Heart left ventricle (tissue), 16 donors: ENCODE measurements at regions of chr14 and their contacts with region 1.

Region 1: GRCh38 chr14:68816262-68816942 is 23.5 kb upstream of the ZFP36L1 start:
- DNase-seq: peak; percentile 91 to 96 (median 92)
- ATAC-seq: peak; percentile 89 to 96 (median 94)
- H3K4me3 ChIP-seq: peak overlapping the region; percentile 17 to 70 (median 56)
- H3K27ac ChIP-seq: peak overlapping the region; percentile 96 to 100 (median 98)
- H3K4me1 ChIP-seq: peaks cover 0 to 61% (median 36%) of the 10 kb centered on the region in 12 donors
- H3K27me3 ChIP-seq: no peaks in the 10 kb centered on the region
- CTCF ChIP-seq: peak in 11 of 12 donors; percentile 94 to 99 (median 97)
- POLR2A ChIP-seq: peak in 1 of 2 donors; percentile 51

Region 2: DNA sequence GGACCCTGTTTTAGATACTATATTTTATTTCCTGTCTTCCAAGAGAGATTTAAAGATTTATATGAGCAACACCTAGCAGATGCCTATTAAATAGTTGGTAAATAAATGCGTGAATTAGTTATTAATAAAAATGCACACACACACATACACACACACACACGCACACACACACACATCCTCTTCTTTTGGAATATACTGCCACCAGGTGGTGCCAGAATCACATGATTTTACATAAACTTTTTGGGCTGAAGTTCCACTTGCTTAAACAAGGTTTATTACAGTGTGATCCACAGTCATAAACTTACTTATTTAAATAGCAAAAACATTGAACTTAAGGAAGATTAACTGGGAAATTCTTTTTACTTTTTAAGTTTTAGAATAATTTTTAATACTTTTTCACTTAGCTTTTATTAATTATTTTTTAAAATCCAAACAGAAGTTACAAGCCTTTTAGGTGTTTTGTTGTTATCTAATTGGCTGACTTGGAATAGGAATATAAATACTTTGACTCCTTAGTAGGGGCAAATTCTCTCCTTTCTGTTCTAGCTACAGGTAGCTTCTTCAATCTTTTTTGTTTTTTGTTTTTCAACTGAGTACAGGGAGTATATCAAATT is 979.3 kb before region 1 on chr14:
- intact Hi-C with region 1: loop called in 6 of 10 experiments (anchors 2 to 10 kb)
- DNase-seq: peak in 3 of 5 donors; percentile 52 to 64 (median 60)
- ATAC-seq: peak in 1 of 4 donors; percentile 41
- H3K4me3 ChIP-seq: no peak overlapping the region
- H3K27ac ChIP-seq: no peak overlapping the region
- H3K4me1 ChIP-seq: no peaks in the 10 kb centered on the region
- H3K27me3 ChIP-seq: no peaks in the 10 kb centered on the region
- CTCF ChIP-seq: peak; percentile 33 to 63 (median 44)
- POLR2A ChIP-seq: no peak

Region 3: GRCh38 chr14:67883717-67884116 is 932.7 kb before region 1 on chr14:
- intact Hi-C with region 1: loop called in 4 of 10 experiments (anchors 2 to 5 kb)
- DNase-seq: no peak
- ATAC-seq: no peak
- H3K4me3 ChIP-seq: no peak overlapping the region
- H3K27ac ChIP-seq: peak overlapping the region in 1 of 12 donors; percentile 22
- H3K4me1 ChIP-seq: peaks cover 0 to 26% (median 0%) of the 10 kb centered on the region in 12 donors
- H3K27me3 ChIP-seq: no peaks in the 10 kb centered on the region
- CTCF ChIP-seq: peak in 9 of 12 donors; percentile 17 to 55 (median 33)
- POLR2A ChIP-seq: no peak

Region 4: DNA sequence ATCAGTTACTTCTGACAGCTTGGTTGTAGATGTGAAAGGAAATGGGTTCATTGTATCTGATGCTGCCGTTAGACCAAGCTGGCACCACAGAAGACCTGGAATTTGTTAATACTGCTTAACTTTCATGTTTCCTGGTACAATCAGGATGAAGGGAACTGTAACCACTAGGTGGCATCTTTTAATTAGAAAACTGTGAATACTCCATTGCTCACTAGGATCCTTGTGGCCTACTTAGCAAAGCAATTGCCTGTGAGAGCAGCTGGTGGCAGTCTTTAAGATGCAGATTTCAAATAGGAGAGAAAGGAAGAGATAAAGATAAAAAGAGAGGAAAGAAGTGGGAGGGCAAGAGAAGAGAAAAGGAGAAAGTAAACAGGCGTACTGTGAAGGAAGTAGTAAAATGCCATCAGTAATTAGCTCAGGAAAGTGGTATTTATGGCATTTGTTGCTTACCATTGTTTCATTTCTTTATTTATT is 882.4 kb before region 1 on chr14:
- intact Hi-C with region 1: loop called in 3 of 10 experiments (anchors 2 to 5 kb)
- DNase-seq: peak in 3 of 5 donors; percentile 27 to 30 (median 30)
- ATAC-seq: peak; percentile 71 to 96 (median 84)
- H3K4me3 ChIP-seq: no peak overlapping the region
- H3K27ac ChIP-seq: peak overlapping the region in 10 of 12 donors; percentile 8 to 58 (median 31)
- H3K4me1 ChIP-seq: peaks cover 0 to 23% (median 6%) of the 10 kb centered on the region in 12 donors
- H3K27me3 ChIP-seq: no peaks in the 10 kb centered on the region
- CTCF ChIP-seq: peak; percentile 46 to 83 (median 62)
- POLR2A ChIP-seq: no peak

Region 5: GRCh38 chr14:67943947-67944346 is 872.5 kb before region 1 on chr14:
- intact Hi-C with region 1: loop called in 9 of 10 experiments (anchors 2 to 5 kb)
- DNase-seq: peak in 4 of 5 donors; percentile 70 to 76 (median 72)
- ATAC-seq: peak; percentile 44 to 76 (median 68)
- H3K4me3 ChIP-seq: no peak overlapping the region
- H3K27ac ChIP-seq: peak overlapping the region in 5 of 12 donors; percentile 16 to 82 (median 47)
- H3K4me1 ChIP-seq: peaks cover 0 to 49% (median 23%) of the 10 kb centered on the region in 12 donors
- H3K27me3 ChIP-seq: no peaks in the 10 kb centered on the region
- CTCF ChIP-seq: peak; percentile 58 to 82 (median 76)
- POLR2A ChIP-seq: no peak

Region 6: DNA sequence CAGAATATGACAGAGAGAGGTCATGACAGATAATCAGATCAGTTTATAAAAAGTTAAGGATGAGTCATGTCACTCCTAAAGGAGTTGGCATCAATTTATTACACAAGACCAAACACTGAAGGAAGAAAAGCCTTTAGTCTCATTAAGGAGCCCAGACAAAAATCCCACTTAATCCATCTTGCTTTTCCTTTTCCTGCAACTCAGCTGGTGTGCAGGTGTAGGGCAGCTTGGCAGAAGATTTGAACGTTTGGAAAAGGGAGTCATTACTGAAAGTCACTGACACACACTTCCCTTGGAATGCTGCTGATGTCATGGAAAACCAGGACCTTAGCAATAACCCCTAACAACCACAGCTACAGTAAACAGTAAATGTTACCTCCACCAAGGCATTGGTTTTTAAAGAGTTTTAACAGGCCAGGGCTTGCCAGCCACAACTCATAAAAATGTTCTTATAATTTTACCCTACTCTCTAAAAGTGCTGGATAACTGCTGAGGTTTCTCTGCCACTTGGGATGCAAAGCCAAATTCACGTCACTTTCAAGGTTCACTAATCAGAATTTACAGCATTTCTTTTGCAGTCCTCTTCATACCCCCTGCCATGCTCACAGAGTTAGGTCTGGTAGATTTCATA is 676.2 kb before region 1 on chr14:
- intact Hi-C with region 1: loop called in 3 of 10 experiments (anchors 5 to 10 kb)
- DNase-seq: peak in 4 of 5 donors; percentile 24 to 61 (median 42)
- ATAC-seq: peak in 3 of 4 donors; percentile 48 to 73 (median 56)
- H3K4me3 ChIP-seq: no peak overlapping the region
- H3K27ac ChIP-seq: peak overlapping the region in 11 of 12 donors; percentile 35 to 89 (median 53)
- H3K4me1 ChIP-seq: peaks cover 3 to 71% (median 35%) of the 10 kb centered on the region in 12 donors
- H3K27me3 ChIP-seq: no peaks in the 10 kb centered on the region
- CTCF ChIP-seq: no peak
- POLR2A ChIP-seq: peak in 1 of 2 donors; percentile 32

Region 7: GRCh38 chr14:68401855-68402254 is 414.5 kb before region 1 on chr14:
- intact Hi-C with region 1: no loop called
- DNase-seq: no peak
- ATAC-seq: peak in 2 of 4 donors; percentile 31 to 72
- H3K4me3 ChIP-seq: no peak overlapping the region
- H3K27ac ChIP-seq: peak overlapping the region in 5 of 12 donors; percentile 17 to 63 (median 40)
- H3K4me1 ChIP-seq: peaks cover 6 to 77% (median 37%) of the 10 kb centered on the region in 12 donors
- H3K27me3 ChIP-seq: no peaks in the 10 kb centered on the region
- CTCF ChIP-seq: no peak
- POLR2A ChIP-seq: no peak

Region 8: GRCh38 chr14:68451696-68452373 is 364.6 kb before region 1 on chr14:
- intact Hi-C with region 1: loop called in 1 of 10 experiments (anchors 5 kb)
- DNase-seq: peak in 3 of 5 donors; percentile 32 to 61 (median 38)
- ATAC-seq: peak; percentile 76 to 95 (median 91)
- H3K4me3 ChIP-seq: no peak overlapping the region
- H3K27ac ChIP-seq: peak overlapping the region in 11 of 12 donors; percentile 13 to 71 (median 59)
- H3K4me1 ChIP-seq: peaks cover 0 to 31% (median 4%) of the 10 kb centered on the region in 12 donors
- H3K27me3 ChIP-seq: no peaks in the 10 kb centered on the region
- CTCF ChIP-seq: no peak
- POLR2A ChIP-seq: no peak